ENCODE measurements at regions of chr7 and their contacts with region 1.

Region 1: GRCh38 chr7:50092579-50093491 is at the start of gene ZPBP:
- DNase-seq: peak; percentile 24 to 55 (median 28)
- ATAC-seq: peak; percentile 78
- H3K4me3 ChIP-seq: no peak within 1 kb of the TSS
- H3K27ac ChIP-seq: no peak within 1 kb of the TSS
- H3K4me1 ChIP-seq: peaks cover 0 to 5% of the 10 kb centered on the region in 2 experiments; a peak in 1 of 5 replicates
- H3K27me3 ChIP-seq: peaks cover 0 to 7% of the 10 kb centered on the region in 2 experiments; a peak in 1 of 5 replicates
- CTCF ChIP-seq: peak; percentile 56 to 86 (median 64)
- EP300 ChIP-seq: no peak
- POLR2A ChIP-seq: no peak
- RAD21 ChIP-seq: peak; percentile 79 to 80
- polyA plus RNA-seq, gene ZPBP: not detected

Region 2: GRCh38 chr7:50560865-50561351 is 468.1 kb after region 1 on chr7:
- CTCF ChIA-PET with region 1: no interaction called
- POLR2A ChIA-PET with region 1: no interaction called
- in situ Hi-C with region 1: no loop called
- intact Hi-C with region 1: loop called (anchors 10 kb)
- DNase-seq: no peak
- ATAC-seq: peak; percentile 8
- H3K4me3 ChIP-seq: no peak overlapping the region
- H3K27ac ChIP-seq: no peak overlapping the region
- H3K4me1 ChIP-seq: peaks cover 7 to 10% of the 10 kb centered on the region in 2 experiments; a peak in 4 of 5 replicates
- H3K27me3 ChIP-seq: peaks cover 21 to 65% of the 10 kb centered on the region in 2 experiments
- CTCF ChIP-seq: no peak
- EP300 ChIP-seq: no peak
- POLR2A ChIP-seq: no peak
- RAD21 ChIP-seq: no peak

Region 3: DNA sequence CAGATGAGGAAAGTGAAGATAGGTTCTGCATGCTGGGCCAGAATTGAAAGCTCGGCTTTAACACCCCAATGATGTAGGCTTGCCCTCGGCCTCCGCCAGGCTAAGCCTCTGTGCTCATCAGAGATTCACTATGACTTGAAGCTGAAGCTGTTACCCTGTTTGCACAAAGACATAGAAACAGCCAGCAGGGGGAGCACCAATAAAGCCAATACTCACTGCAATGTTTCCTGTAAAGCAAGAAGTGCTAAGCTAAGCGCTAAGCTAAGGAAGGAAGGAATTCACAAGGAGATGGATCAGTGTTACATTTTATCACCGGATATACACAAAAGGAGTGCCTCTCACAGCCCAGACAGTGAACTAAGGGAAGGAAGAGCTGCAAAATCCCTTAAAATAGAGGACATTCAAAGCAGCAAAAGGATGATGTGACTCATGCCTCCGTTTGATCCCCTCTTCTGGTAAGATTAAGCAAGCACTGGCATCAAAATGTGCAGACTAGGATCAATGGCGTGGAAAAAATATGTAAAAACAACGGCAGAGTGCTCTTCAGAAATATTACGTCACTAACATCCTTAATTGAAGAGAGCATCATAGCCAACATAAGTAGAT is 1070.0 kb after region 1 on chr7:
- CTCF ChIA-PET with region 1: interaction called, 5 read pairs
- POLR2A ChIA-PET with region 1: no interaction called
- in situ Hi-C with region 1: no loop called
- intact Hi-C with region 1: loop called (anchors 2 kb)
- DNase-seq: peak; percentile 39 to 81 (median 60)
- ATAC-seq: peak; percentile 96
- H3K4me3 ChIP-seq: no peak overlapping the region
- H3K27ac ChIP-seq: no peak overlapping the region
- H3K4me1 ChIP-seq: no peaks in the 10 kb centered on the region; a peak in 1 of 5 replicates
- H3K27me3 ChIP-seq: peaks cover 0 to 11% of the 10 kb centered on the region in 2 experiments; a peak in 2 of 5 replicates
- CTCF ChIP-seq: peak; percentile 82 to 86 (median 83)
- EP300 ChIP-seq: no peak
- POLR2A ChIP-seq: no peak
- RAD21 ChIP-seq: peak; percentile 80 to 92

Region 4: DNA sequence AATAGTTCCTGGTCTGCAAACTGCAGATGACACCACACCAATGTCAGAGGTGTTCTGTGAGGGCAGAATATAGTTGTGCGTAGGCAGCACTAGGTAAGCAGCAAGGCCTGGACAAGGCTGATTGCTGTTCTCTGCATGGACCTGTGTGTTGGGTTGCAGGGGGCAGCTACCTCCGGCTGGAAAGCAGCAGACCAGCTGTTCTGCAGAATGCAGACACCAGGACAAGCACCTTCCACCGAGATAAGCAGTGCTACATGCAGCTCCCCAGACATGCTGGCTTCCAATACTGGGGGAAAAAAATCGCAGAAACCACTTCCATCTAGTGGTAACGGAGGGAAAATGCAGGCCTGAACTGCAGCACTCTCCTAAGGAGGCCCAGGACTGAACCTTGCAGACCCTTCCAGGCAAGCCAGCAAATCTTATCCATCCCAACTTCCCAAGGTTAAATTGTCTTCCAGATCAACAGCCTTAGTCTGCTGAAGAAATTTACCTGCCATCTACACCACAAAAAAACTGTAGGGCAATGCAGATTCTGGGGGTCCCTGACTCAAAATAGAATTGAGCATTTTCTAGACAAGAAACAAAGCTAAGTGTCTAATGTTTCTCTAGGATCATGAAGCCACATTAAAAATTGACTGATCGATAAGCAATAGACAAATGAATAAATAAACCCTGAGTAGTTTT is 1274.2 kb after region 1 on chr7:
- CTCF ChIA-PET with region 1: no interaction called
- POLR2A ChIA-PET with region 1: no interaction called
- in situ Hi-C with region 1: no loop called
- intact Hi-C with region 1: loop called (anchors 10 kb)
- DNase-seq: peak; percentile 66 to 78 (median 66)
- ATAC-seq: peak; percentile 97
- H3K4me3 ChIP-seq: no peak overlapping the region
- H3K27ac ChIP-seq: no peak overlapping the region
- H3K4me1 ChIP-seq: no peaks in the 10 kb centered on the region; a peak in 2 of 5 replicates
- H3K27me3 ChIP-seq: peaks cover 0 to 10% of the 10 kb centered on the region in 2 experiments; a peak in 1 of 5 replicates
- CTCF ChIP-seq: peak; percentile 74 to 82 (median 80)
- EP300 ChIP-seq: no peak
- POLR2A ChIP-seq: no peak
- RAD21 ChIP-seq: peak; percentile 69 to 77

Region 5: GRCh38 chr7:51430480-51431086 is 1337.7 kb after region 1 on chr7:
- CTCF ChIA-PET with region 1: no interaction called
- POLR2A ChIA-PET with region 1: no interaction called
- in situ Hi-C with region 1: no loop called
- intact Hi-C with region 1: loop called (anchors 5 kb)
- DNase-seq: peak; percentile 67 to 78 (median 76)
- ATAC-seq: peak; percentile 76
- H3K4me3 ChIP-seq: no peak overlapping the region
- H3K27ac ChIP-seq: no peak overlapping the region
- H3K4me1 ChIP-seq: no peaks in the 10 kb centered on the region
- H3K27me3 ChIP-seq: peaks cover 0 to 8% of the 10 kb centered on the region in 2 experiments; a peak in 2 of 5 replicates
- CTCF ChIP-seq: peak; percentile 64 to 84 (median 70)
- EP300 ChIP-seq: no peak
- POLR2A ChIP-seq: no peak
- RAD21 ChIP-seq: peak; percentile 71 to 85

Measured in K562 (cell line).